ENCODE measurements at regions of chr19 and their contacts with region 1.

Region 1: DNA sequence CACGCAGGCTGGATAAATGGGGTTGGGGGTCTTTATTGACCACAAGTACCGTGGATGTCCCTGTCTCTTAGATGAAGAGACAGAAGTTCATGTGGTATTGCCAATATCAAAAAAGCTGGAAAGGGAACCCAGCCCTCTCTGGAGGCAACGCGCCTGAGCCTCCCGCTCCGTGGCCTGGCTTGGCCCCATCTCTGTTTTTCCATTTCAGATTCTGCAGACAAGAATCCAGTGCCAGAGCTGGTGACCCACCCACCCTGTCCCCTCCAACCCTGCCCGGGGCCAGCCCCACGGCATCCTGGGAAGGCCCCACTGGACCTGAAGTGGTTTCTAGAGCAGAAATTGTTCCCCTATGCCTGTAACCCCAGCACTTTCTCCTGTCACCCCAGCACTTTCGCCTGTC is 57.7 kb downstream of the PTPRS start:
- DNase-seq: no peak
- H3K4me3 ChIP-seq: no peak overlapping the region
- H3K27me3 ChIP-seq: no peaks in the 10 kb centered on the region
- CTCF ChIP-seq: no peak

Region 2: GRCh38 chr19:5292822-5293611 is 10.1 kb after region 1 on chr19:
- CTCF ChIA-PET with region 1: interaction called, 3 read pairs
- POLR2A ChIA-PET with region 1: interaction called, 13 read pairs
- DNase-seq: no peak
- H3K4me3 ChIP-seq: peak overlapping the region; percentile 85
- H3K27me3 ChIP-seq: no peaks in the 10 kb centered on the region
- CTCF ChIP-seq: no peak